ENCODE measurements at regions of chr10 and their contacts with region 1.

Region 1: DNA sequence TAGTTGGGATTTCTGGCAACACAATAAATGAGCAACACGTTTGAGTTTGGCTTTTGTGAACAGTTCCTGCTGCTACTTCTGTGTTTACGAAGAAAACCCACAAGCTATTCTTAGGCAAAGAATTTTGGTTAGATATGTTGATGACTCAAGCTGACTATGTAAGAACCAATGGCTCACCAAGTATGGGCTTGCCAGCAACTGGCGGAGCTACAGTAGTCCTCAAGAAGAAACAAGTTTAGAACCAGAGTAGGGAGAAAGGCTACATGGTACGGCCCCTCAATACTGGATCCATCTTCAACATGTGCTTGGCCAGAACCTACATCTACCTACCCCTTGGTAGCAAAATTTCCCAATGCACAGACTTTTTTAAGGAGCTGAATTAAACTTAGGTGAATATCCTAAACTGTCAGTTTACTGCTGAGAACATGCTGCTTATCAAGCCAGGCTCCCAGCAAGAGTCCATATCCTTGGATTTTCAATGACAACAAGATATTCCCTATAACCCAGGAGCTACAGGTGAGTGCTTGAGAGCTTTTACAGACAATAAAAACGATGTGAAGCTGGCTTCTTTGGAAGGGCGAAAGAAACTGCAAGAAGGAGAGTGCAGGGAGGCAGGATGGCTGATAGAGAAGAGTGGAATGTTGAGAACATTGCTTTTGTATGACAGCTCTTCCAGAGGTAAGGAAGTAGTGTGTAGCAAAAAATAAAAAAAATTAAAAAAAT is 74.3 kb upstream of the ASAH2 start:
- DNase-seq: peak; percentile 71
- ATAC-seq: peak; percentile 94 to 99
- H3K4me3 ChIP-seq: peak overlapping the region in 2 of 4 donors; percentile 3 to 5
- H3K27ac ChIP-seq: peak overlapping the region; percentile 39 to 80 (median 64)
- H3K4me1 ChIP-seq: peaks cover 33 to 42% of the 10 kb centered on the region in 2 donors
- H3K27me3 ChIP-seq: no peaks in the 10 kb centered on the region
- CTCF ChIP-seq: no peak
- POLR2A ChIP-seq: no peak

Region 2: GRCh38 chr10:50347394-50347802 is 21.8 kb after region 1 on chr10:
- in situ Hi-C with region 1: no loop called
- intact Hi-C with region 1: no loop called
- DNase-seq: no peak
- ATAC-seq: no peak
- H3K4me3 ChIP-seq: no peak overlapping the region
- H3K27ac ChIP-seq: no peak overlapping the region
- H3K4me1 ChIP-seq: peaks cover 0 to 11% of the 10 kb centered on the region in 2 donors
- H3K27me3 ChIP-seq: no peaks in the 10 kb centered on the region
- CTCF ChIP-seq: no peak
- POLR2A ChIP-seq: no peak

Region 3: DNA sequence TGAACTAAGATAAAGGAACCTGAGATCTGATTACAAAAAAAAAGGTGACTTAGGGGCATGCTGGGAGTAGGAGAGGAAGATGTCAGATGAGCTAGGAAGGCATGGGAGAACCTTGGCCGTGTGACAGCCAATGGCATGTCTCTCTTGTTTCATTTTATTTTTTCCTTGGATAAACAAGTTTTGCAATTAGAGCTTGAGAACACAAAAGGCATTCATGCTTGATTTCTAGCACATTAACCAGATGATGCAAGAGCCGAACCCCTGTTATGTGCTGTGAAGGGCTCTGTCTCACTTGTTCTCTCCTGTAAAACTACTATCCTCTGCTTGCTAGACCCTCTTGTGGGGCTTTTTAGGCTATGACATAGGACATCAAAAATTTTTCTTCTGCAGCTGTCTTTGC is 60.0 kb after region 1 on chr10:
- in situ Hi-C with region 1: no loop called
- intact Hi-C with region 1: loop called (anchors 5 kb)
- DNase-seq: peak; percentile 59 to 76
- ATAC-seq: peak; percentile 32 to 82
- H3K4me3 ChIP-seq: no peak overlapping the region
- H3K27ac ChIP-seq: peak overlapping the region; percentile 68 to 83 (median 72)
- H3K4me1 ChIP-seq: peaks cover 50% of the 10 kb centered on the region in 2 donors
- H3K27me3 ChIP-seq: no peaks in the 10 kb centered on the region
- CTCF ChIP-seq: no peak
- POLR2A ChIP-seq: no peak

Region 4: GRCh38 chr10:50417886-50418830 is 92.5 kb after region 1 on chr10:
- in situ Hi-C with region 1: no loop called
- intact Hi-C with region 1: loop called (anchors 5 kb)
- DNase-seq: peak; percentile 39 to 48
- ATAC-seq: peak; percentile 81 to 85
- H3K4me3 ChIP-seq: peak overlapping the region; percentile 74 to 84 (median 76)
- H3K27ac ChIP-seq: peak overlapping the region; percentile 60 to 77 (median 66)
- H3K4me1 ChIP-seq: peaks cover 0 to 21% of the 10 kb centered on the region in 2 donors
- H3K27me3 ChIP-seq: no peaks in the 10 kb centered on the region
- CTCF ChIP-seq: peak in 1 of 5 experiments; percentile 11
- POLR2A ChIP-seq: no peak

Region 5: DNA sequence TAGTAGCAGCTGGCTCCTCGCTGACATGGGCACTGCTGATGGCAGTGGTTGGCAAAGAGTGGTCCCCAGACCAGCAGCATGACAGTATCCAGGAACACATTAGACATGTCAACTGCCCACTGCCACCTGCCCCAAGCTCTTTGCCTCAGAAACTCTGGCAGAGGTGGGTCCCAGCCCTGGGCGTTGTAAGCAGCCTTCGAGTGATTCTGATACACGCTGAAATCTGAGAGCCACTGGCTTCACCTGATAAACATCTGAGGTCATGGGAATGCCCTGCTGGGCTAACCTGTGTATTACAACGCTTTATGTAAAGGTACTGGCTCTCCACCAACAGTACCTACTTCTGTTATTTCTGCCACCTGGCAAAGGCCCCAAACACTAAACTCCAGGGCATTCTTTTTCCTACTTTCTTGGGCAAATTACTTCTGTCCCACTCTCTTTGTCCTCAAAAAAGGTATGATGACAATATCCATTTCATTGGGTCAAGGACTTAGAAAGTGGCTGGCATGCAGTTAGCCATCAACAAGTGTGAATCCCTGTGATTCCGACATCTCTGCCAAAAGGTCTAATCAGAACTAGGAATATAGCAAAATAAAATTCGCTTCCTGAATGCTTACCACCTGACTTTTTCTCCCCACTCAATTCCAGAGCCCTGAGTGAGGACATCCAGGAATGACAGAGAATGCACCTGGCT is 289.0 kb after region 1 on chr10:
- in situ Hi-C with region 1: no loop called
- intact Hi-C with region 1: loop called (anchors 5 kb)
- DNase-seq: peak; percentile 44 to 56
- ATAC-seq: peak; percentile 88 to 91
- H3K4me3 ChIP-seq: no peak overlapping the region
- H3K27ac ChIP-seq: peak overlapping the region; percentile 60 to 77 (median 60)
- H3K4me1 ChIP-seq: peaks cover 41% of the 10 kb centered on the region in 2 donors
- H3K27me3 ChIP-seq: no peaks in the 10 kb centered on the region
- CTCF ChIP-seq: peak in 4 of 5 experiments; percentile 37 to 64 (median 52)
- POLR2A ChIP-seq: no peak

Measured in gastrocnemius medialis (tissue), 4 donors.